Naive thymus-derived CD4-positive, alpha-beta T cell (primary cell): ENCODE measurements at regions of chr2 and their contacts with region 1.

Region 1: DNA sequence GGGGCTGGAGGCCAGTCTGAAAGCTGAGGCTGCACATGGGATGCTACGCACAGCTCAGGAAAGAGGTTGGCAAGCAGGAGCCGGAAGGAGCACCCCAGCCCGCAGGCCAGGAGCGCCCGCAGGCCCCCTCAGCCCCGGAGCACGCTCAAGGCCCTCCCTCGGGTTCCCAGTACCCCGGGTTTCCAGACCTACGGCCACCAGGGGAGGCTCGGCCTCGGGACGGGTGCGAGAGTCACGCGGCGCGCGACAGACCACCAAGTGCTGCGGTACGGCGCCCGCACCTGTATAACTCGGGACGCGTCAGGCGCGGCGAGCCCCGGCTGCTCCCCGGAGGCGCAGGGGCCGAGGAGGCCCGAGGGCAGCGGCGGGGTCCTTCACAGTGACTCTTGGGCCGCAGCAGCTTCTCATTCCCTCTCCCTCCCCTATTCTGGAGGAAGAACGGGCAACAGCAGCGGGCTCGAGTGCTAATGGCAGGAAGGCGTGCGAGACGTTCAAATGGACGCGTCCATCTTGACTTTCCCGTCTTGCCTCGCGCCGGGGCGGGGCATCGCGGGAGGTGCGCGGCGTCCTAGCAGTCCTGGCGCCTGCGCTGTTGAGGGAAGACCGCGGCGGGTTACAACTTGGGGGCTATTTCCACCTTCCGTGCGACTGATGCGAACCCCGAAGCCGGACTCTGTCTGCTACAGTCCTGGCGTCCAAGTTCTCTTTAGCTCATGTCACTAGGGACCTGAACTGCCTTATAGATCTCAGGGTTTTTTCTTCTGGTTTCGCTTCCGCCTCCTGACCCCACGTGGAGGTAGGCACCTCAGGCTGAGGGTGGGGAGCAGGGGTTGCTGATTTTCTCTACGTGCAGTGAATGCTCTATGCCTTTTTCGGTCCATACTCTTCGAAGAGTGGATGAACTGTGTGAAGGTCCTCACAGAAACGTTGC is at the start of gene ANAPC1:
- DNase-seq: peak; percentile 75 to 87 (median 84)
- ATAC-seq: peak; percentile 98
- H3K4me3 ChIP-seq: peak within 1 kb of the TSS; percentile 69
- H3K4me3 Mint-ChIP-seq: peak within 1 kb of the TSS; percentile 92 to 99 (median 96)
- H3K27ac ChIP-seq: peak within 1 kb of the TSS; percentile 85
- H3K27ac Mint-ChIP-seq: peak within 1 kb of the TSS; percentile 92 to 98 (median 96)
- H3K4me1 ChIP-seq: peaks cover 0 to 10% of the 10 kb centered on the region in 2 donors
- H3K4me1 Mint-ChIP-seq: peaks cover 2 to 26% (median 13%) of the 10 kb centered on the region in 7 donors
- H3K27me3 ChIP-seq: no peaks in the 10 kb centered on the region
- H3K27me3 Mint-ChIP-seq: no peaks in the 10 kb centered on the region
- total RNA-seq, gene ANAPC1: 51.8 to 77.2 (median 62.7) TPM

Region 2: DNA sequence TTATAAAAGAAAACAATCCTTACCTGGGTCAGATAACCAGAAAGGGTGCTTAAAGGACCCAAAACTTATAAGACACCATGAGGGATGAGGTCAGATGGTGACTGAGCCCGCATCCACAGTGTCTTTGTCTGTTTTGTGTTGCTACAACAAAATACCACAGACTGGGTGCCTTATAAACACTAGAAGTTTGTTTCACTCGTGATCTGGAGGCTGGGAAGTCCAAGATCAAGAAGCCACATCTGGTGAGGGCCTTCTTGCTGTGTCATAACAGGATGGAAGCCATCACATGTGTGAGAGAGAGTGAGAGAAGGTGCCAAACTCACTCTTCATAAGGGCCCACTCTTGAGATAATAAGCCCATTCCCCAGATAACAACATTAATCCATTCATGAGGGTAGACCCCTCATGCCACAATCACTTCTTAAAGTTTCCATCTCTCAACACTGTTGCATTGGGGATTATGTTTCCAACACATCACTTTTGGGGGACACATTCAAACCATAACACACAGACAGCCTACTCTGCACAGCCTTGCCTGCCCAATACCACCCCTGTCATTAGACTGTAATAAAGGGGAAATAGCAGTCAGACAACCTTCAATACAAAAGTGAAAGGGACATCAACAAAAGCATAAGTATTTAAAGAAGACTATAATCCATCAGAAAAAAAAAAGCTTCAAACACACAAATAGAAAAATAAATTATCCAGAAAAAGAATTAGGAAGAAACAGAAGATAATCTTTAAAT is 249.7 kb before region 1 on chr2:
- CTCF ChIA-PET with region 1: no interaction called
- POLR2A ChIA-PET with region 1: no interaction called
- intact Hi-C with region 1: no loop called
- DNase-seq: no peak
- ATAC-seq: peak; percentile 82
- H3K4me3 ChIP-seq: no peak overlapping the region
- H3K4me3 Mint-ChIP-seq: peak overlapping the region in 1 of 10 donors; percentile 6
- H3K27ac ChIP-seq: no peak overlapping the region
- H3K27ac Mint-ChIP-seq: peak overlapping the region in 1 of 9 donors; percentile 80
- H3K4me1 ChIP-seq: no peaks in the 10 kb centered on the region
- H3K4me1 Mint-ChIP-seq: peaks cover 0 to 24% (median 5%) of the 10 kb centered on the region in 7 donors
- H3K27me3 ChIP-seq: no peaks in the 10 kb centered on the region
- H3K27me3 Mint-ChIP-seq: peaks cover 9 to 31% (median 17%) of the 10 kb centered on the region in 5 donors

Region 3: GRCh38 chr2:111897924-111898702 is 14.2 kb after region 1 on chr2 and contains the start of gene MERTK:
- CTCF ChIA-PET with region 1: no interaction called
- POLR2A ChIA-PET with region 1: interaction called, 4 read pairs
- intact Hi-C with region 1: loop called (anchors 1 to 2 kb)
- DNase-seq: peak; percentile 26 to 70 (median 50)
- ATAC-seq: peak; percentile 86
- H3K4me3 ChIP-seq: peak within 1 kb of the TSS; percentile 65
- H3K4me3 Mint-ChIP-seq: peak within 1 kb of the TSS; percentile 68 to 88 (median 82)
- H3K27ac ChIP-seq: no peak within 1 kb of the TSS
- H3K27ac Mint-ChIP-seq: peak within 1 kb of the TSS in 4 of 9 donors; percentile 28 to 75 (median 48)
- H3K4me1 ChIP-seq: peaks cover 0 to 6% of the 10 kb centered on the region in 2 donors
- H3K4me1 Mint-ChIP-seq: peaks cover 4 to 21% (median 13%) of the 10 kb centered on the region in 7 donors
- H3K27me3 ChIP-seq: no peaks in the 10 kb centered on the region
- H3K27me3 Mint-ChIP-seq: peaks cover 0 to 56% (median 26%) of the 10 kb centered on the region in 5 donors
- total RNA-seq, gene MERTK: 0.22 to 2.6 (median 1.2) TPM

Region 4: DNA sequence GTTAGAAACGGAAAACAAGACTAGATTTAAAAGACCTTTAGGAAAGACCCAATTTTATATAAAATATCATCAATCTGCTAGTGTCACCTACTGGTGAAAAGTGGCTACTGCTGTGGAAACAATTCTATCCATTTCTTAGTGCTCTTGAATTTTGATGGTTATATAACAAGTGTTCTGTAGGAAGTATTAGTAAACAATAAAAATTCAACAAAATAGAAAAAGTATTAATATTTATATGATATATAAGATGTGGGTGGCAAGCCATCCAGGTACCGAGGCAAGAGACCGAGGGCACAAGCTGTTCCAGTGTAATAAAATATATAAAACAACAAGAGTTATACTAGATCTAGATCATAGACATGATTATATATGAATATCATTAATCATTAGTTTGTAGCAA is 165.0 kb after region 1 on chr2:
- CTCF ChIA-PET with region 1: interaction called, 29 read pairs
- POLR2A ChIA-PET with region 1: interaction called, 5 read pairs
- intact Hi-C with region 1: loop called (anchors 1 kb)
- DNase-seq: peak in 7 of 9 donors; percentile 46 to 70 (median 61)
- ATAC-seq: peak; percentile 78
- H3K4me3 ChIP-seq: no peak overlapping the region
- H3K4me3 Mint-ChIP-seq: no peak overlapping the region
- H3K27ac ChIP-seq: no peak overlapping the region
- H3K27ac Mint-ChIP-seq: no peak overlapping the region
- H3K4me1 ChIP-seq: peaks cover 5 to 7% of the 10 kb centered on the region in 2 donors
- H3K4me1 Mint-ChIP-seq: peaks cover 6 to 12% (median 8%) of the 10 kb centered on the region in 7 donors
- H3K27me3 ChIP-seq: no peaks in the 10 kb centered on the region
- H3K27me3 Mint-ChIP-seq: peaks cover 0 to 23% (median 0%) of the 10 kb centered on the region in 5 donors

Region 5: GRCh38 chr2:112054847-112055729 is 171.2 kb after region 1 on chr2 and contains the start of gene TMEM87B:
- CTCF ChIA-PET with region 1: interaction called, 29 read pairs
- POLR2A ChIA-PET with region 1: interaction called, 7 read pairs
- intact Hi-C with region 1: loop called (anchors 1 kb)
- DNase-seq: peak; percentile 90 to 98 (median 96)
- ATAC-seq: peak; percentile 80
- H3K4me3 ChIP-seq: peak within 1 kb of the TSS; percentile 85
- H3K4me3 Mint-ChIP-seq: peak within 1 kb of the TSS; percentile 80 to 100 (median 95)
- H3K27ac ChIP-seq: peak within 1 kb of the TSS; percentile 82
- H3K27ac Mint-ChIP-seq: peak within 1 kb of the TSS; percentile 92 to 100 (median 98)
- H3K4me1 ChIP-seq: peaks cover 16 to 19% of the 10 kb centered on the region in 2 donors
- H3K4me1 Mint-ChIP-seq: peaks cover 33 to 48% (median 42%) of the 10 kb centered on the region in 7 donors
- H3K27me3 ChIP-seq: no peaks in the 10 kb centered on the region
- H3K27me3 Mint-ChIP-seq: peaks cover 0 to 2% (median 0%) of the 10 kb centered on the region in 5 donors
- total RNA-seq, gene TMEM87B: 14.0 to 26.9 (median 17.4) TPM